Endothelial cell of umbilical vein (primary cell): ENCODE measurements at regions of chr10 and their contacts with region 1.

Region 1: DNA sequence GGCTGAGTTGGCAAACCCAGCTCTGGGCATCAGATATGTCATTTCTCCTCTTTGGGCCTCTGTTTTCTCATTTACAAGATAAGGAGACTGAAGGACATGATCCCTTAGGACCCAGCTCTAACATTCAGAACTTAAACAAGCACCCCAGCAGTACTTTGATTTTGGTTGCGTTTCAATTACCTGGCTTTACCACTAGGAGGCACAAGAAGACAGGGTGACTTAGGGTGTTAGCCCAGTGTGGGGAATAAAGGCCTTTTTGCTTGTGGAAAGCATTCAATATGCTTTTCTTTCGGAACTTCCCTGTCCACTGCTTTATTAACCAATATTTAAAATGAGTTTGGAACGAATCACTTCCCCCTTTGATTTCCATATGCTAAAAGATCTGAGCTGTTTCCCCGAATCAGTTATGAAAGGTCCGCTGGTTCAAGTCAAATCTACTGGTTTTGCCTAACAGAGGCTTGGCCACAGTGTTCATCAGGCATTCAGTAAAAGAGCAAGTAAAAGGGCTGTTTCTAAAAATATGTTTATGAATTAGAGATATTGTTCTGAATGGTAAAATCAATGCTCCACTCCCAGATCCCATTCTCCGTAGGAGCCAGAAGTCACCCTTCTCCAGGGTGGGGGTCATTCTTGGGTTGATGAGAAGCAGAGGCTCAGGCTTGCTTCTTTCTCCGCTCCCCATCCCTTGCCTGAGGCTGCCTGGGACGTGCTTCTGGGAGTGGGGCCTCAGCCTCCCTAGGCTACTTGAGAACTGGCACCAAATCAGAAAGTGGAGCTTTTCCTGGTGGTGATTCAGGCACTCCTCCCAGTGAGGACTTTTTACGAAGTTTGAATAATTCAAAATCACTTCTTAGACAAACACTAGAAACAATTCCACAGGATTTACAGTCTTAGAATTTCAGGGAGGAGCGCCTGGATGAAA is 105.5 kb downstream of the MYOF start:
- DNase-seq: peak; percentile 90
- H3K4me3 ChIP-seq: no peak overlapping the region
- H3K27ac ChIP-seq: peak overlapping the region; percentile 57
- H3K4me1 ChIP-seq: peaks cover 46% of the 10 kb centered on the region
- H3K27me3 ChIP-seq: no peaks in the 10 kb centered on the region
- CTCF ChIP-seq: peak; percentile 77 to 78
- POLR2A ChIP-seq: no peak

Region 2: DNA sequence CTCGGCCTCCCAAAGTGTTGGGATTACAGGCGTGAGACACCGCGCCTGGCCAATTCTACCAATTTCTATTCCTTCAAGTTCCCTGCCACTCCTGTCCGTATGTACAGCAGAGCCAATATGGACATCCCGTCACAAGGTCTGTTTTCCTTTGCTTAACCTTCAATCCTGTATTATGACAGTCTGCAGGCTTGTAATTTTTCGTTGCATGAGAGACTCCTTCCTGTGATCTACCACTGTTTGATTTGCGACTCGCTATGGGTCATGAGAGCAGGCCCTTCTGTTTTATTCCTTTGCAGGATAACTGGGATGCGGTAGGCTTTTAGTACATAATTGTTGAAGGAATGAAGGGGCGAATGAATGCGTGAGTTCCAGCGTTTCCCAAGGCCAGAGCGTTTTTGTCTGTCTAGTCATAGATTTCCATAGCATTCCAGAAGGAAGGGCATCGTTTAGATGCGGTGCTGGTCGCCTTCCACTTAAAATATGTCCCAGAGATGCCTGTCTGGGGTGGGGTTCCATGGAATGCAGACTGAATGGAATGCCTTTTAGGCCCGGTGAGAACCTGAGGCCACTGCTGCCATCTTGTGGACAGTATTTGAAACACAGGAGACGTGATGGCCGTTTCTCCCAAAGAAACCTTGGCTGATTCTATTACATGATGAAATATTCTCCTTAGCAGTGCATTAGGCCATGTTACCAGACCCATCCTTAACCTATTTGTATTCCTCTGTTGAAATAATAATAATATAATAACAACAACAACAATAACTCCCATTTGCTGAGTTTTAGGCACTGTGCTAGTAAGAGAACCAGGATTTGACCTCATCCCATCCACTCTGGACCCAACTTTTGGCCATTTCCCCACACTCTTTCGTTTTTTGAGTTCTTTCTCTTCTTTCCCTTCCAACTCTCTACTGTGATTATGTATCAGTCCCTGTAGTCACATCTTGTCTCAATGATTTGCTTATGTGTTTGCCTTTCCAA is 87.7 kb before region 1 on chr10:
- CTCF ChIA-PET with region 1: no interaction called
- POLR2A ChIA-PET with region 1: no interaction called
- dilution Hi-C with region 1: no loop called
- intact Hi-C with region 1: no loop called
- DNase-seq: peak; percentile 71
- H3K4me3 ChIP-seq: no peak overlapping the region
- H3K27ac ChIP-seq: peak overlapping the region; percentile 8
- H3K4me1 ChIP-seq: peaks cover 2% of the 10 kb centered on the region
- H3K27me3 ChIP-seq: no peaks in the 10 kb centered on the region
- CTCF ChIP-seq: peak; percentile 77 to 83
- POLR2A ChIP-seq: no peak

Region 3: DNA sequence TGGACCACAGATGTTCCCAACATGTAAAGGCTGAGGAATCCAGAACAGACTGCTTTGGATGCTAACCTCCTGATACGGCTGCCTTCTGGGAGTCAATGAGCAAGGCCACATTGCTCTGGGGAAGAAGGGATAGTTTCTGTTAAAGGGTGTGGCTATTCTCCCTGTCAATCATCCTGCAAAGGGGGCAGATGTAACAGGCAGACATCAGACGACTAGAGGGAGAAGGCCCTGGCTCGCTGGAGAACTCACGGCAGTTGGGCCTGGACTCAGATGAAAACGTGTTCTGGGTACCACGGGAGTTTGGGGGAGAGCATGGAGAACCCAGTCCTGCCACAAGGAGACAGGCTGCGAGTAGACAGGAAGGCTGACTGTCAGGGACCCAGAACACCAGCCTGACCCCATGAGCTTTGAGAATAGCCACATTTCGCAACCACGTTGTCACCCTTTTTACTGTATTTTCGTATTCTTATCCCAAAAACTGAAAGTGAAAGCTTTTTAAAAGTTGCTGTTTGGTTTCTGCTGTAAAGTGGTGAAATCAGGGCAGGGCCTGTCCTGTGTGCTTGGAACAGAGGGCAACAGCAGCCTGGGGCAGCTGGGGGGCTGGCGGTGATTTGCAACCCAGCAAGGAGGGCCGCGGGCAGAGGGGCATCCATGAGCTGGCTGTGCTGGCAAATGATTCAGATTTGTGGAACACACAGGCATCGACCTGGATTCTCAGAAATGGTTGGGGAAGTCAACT is 10.2 kb after region 1 on chr10:
- CTCF ChIA-PET with region 1: interaction called, 31 read pairs
- POLR2A ChIA-PET with region 1: no interaction called
- dilution Hi-C with region 1: no loop called
- intact Hi-C with region 1: no loop called
- DNase-seq: no peak
- H3K4me3 ChIP-seq: no peak overlapping the region
- H3K27ac ChIP-seq: no peak overlapping the region
- H3K4me1 ChIP-seq: peaks cover 17% of the 10 kb centered on the region
- H3K27me3 ChIP-seq: no peaks in the 10 kb centered on the region
- CTCF ChIP-seq: no peak
- POLR2A ChIP-seq: no peak

Region 4: DNA sequence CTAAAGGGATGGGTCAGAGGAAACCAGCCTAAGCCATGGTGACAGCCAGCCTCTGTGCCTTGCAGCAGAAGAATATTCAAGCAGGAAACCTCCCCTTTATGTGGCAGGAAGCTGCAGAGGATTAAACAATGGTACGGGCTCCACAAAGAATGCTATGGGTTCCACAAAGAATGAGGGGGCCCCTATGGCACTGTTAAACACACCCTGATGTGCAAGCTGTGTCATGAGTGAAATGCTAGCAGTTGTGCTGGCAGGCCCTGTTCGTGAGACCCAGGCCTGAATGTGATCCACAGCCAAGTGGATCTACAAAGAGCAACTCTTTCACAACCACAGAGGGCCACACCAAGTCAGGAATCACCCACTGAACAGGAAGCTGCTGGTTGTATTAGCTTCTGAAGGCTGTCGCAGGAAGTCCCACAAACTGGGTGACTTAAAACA is 36.6 kb after region 1 on chr10:
- CTCF ChIA-PET with region 1: interaction called, 5 read pairs
- POLR2A ChIA-PET with region 1: no interaction called
- dilution Hi-C with region 1: no loop called
- intact Hi-C with region 1: loop called (anchors 2 kb)
- DNase-seq: peak; percentile 65
- H3K4me3 ChIP-seq: no peak overlapping the region
- H3K27ac ChIP-seq: peak overlapping the region; percentile 49
- H3K4me1 ChIP-seq: peaks cover 28% of the 10 kb centered on the region
- H3K27me3 ChIP-seq: no peaks in the 10 kb centered on the region
- CTCF ChIP-seq: no peak
- POLR2A ChIP-seq: no peak

Region 5: GRCh38 chr10:93445097-93445960 is 68.7 kb after region 1 on chr10:
- CTCF ChIA-PET with region 1: interaction called, 17 read pairs
- POLR2A ChIA-PET with region 1: no interaction called
- dilution Hi-C with region 1: no loop called
- intact Hi-C with region 1: no loop called
- DNase-seq: peak; percentile 98
- H3K4me3 ChIP-seq: no peak overlapping the region
- H3K27ac ChIP-seq: peak overlapping the region; percentile 67
- H3K4me1 ChIP-seq: peaks cover 22% of the 10 kb centered on the region
- H3K27me3 ChIP-seq: no peaks in the 10 kb centered on the region
- CTCF ChIP-seq: no peak
- POLR2A ChIP-seq: peak; percentile 15

Region 6: GRCh38 chr10:93463678-93464476 is 87.2 kb after region 1 on chr10:
- CTCF ChIA-PET with region 1: interaction called, 32 read pairs
- POLR2A ChIA-PET with region 1: interaction called, 4 read pairs
- dilution Hi-C with region 1: no loop called
- intact Hi-C with region 1: loop called (anchors 1 kb)
- DNase-seq: peak; percentile 41
- H3K4me3 ChIP-seq: no peak overlapping the region
- H3K27ac ChIP-seq: peak overlapping the region; percentile 89
- H3K4me1 ChIP-seq: peaks cover 86% of the 10 kb centered on the region
- H3K27me3 ChIP-seq: no peaks in the 10 kb centered on the region
- CTCF ChIP-seq: no peak
- POLR2A ChIP-seq: peak; percentile 32

Region 7: DNA sequence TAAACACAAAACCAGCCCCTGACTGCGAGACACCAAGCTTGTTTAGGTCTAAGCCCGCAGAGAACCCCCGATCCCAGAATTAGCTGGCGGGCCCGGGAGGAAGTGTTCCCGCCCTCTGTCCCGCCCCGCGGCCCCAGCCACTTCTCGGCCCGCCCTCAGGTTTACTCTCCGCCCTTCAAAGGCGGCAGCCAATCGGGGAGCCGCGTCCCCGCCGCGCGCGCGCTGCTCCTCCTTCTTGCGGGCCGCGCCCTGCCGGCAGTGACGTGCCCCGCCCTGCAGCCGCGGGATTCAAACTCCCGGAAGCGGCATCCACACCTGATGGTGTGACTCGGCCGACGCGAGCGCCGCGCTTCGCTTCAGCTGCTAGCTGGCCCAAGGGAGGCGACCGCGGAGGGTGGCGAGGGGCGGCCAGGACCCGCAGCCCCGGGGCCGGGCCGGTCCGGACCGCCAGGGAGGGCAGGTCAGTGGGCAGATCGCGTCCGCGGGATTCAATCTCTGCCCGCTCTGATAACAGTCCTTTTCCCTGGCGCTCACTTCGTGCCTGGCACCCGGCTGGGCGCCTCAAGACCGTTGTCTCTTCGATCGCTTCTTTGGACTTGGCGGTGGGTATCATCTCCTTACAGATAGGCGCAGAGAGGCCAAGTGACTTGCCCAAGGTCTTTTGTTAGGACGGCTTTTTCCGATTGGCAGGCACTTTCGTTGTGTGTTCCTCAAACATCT is 119.8 kb after region 1 on chr10 and contains the start of gene CEP55:
- CTCF ChIA-PET with region 1: interaction called, 15 read pairs
- POLR2A ChIA-PET with region 1: no interaction called
- dilution Hi-C with region 1: no loop called
- intact Hi-C with region 1: loop called (anchors 1 kb)
- DNase-seq: peak; percentile 97
- H3K4me3 ChIP-seq: peak within 1 kb of the TSS; percentile 83 to 96 (median 89)
- H3K27ac ChIP-seq: peak within 1 kb of the TSS; percentile 62
- H3K4me1 ChIP-seq: peaks cover 21% of the 10 kb centered on the region
- H3K27me3 ChIP-seq: no peaks in the 10 kb centered on the region
- CTCF ChIP-seq: no peak
- POLR2A ChIP-seq: peak; percentile 76
- total RNA-seq, gene CEP55: 58.9 and 63.0 TPM in 2 replicates

Region 8: GRCh38 chr10:93515071-93516005 is 138.7 kb after region 1 on chr10:
- CTCF ChIA-PET with region 1: interaction called, 88 read pairs
- POLR2A ChIA-PET with region 1: no interaction called
- dilution Hi-C with region 1: no loop called
- intact Hi-C with region 1: loop called (anchors 1 kb)
- DNase-seq: peak; percentile 66
- H3K4me3 ChIP-seq: no peak overlapping the region
- H3K27ac ChIP-seq: no peak overlapping the region
- H3K4me1 ChIP-seq: peaks cover 4% of the 10 kb centered on the region
- H3K27me3 ChIP-seq: no peaks in the 10 kb centered on the region
- CTCF ChIP-seq: no peak
- POLR2A ChIP-seq: no peak

Region 9: GRCh38 chr10:93541402-93542357 is 165.0 kb after region 1 on chr10:
- CTCF ChIA-PET with region 1: no interaction called
- POLR2A ChIA-PET with region 1: no interaction called
- dilution Hi-C with region 1: no loop called
- intact Hi-C with region 1: no loop called
- DNase-seq: peak; percentile 69
- H3K4me3 ChIP-seq: peak overlapping the region in 1 of 3 experiments; percentile 7
- H3K27ac ChIP-seq: no peak overlapping the region
- H3K4me1 ChIP-seq: peaks cover 5% of the 10 kb centered on the region
- H3K27me3 ChIP-seq: peaks cover 0 to 2% of the 10 kb centered on the region in 2 experiments
- CTCF ChIP-seq: peak; percentile 89 to 97
- POLR2A ChIP-seq: no peak